Left colon (tissue), 2 donors: ENCODE measurements at regions of chr15 and their contacts with region 1.

Region 1: DNA sequence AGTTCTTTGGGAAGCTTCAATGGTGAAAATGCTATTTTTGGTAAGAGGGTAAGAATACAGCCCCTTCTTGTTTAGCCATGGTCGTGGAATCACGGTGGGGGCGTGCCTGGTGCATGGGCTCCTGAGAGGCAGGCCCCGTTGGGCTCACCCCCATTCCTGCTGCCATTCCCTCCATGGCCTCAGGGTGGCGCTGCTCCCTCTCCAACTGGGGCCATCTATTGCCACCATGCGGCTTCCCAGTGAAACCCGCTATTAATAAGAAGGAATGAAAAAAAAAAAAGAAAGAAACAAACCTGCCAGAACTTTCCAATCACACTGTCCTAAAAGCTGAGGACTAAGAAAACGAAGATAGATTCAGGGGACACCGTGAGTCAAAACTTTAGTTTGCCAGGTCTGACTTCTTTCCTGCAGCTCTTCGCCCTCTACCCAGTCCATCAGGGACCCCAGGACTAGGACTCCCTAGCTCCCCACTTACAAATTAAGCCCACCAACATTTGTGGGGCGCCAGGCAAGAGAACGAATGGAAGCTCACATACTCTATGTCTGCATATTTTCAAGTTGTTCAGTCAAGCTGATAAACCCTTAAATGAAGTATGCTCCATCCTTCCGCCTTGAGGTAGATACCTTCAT is 30.6 kb upstream of the ABHD2 start:
- DNase-seq: peak; percentile 61 to 83
- ATAC-seq: peak; percentile 88

Region 2: GRCh38 chr15:89139400-89140166 is 82.0 kb after region 1 on chr15:
- intact Hi-C with region 1: loop called in 1 of 2 experiments (anchors 10 kb)
- DNase-seq: no peak
- ATAC-seq: no peak